ENCODE measurements at regions of chr5 and their contacts with region 1.

Region 1: GRCh38 chr5:68170826-68171558 is 44.6 kb upstream of the PIK3R1 start:
- DNase-seq: no peak
- ATAC-seq: no peak
- H3K4me3 ChIP-seq: no peak overlapping the region
- H3K4me3 Mint-ChIP-seq: no peak overlapping the region
- H3K27ac ChIP-seq: no peak overlapping the region
- H3K27ac Mint-ChIP-seq: no peak overlapping the region
- H3K4me1 ChIP-seq: no peaks in the 10 kb centered on the region
- H3K4me1 Mint-ChIP-seq: no peaks in the 10 kb centered on the region
- H3K27me3 ChIP-seq: peaks cover 0 to 4% of the 10 kb centered on the region in 2 experiments
- H3K27me3 Mint-ChIP-seq: peaks cover 0 to 3% of the 10 kb centered on the region in 2 donors

Region 2: DNA sequence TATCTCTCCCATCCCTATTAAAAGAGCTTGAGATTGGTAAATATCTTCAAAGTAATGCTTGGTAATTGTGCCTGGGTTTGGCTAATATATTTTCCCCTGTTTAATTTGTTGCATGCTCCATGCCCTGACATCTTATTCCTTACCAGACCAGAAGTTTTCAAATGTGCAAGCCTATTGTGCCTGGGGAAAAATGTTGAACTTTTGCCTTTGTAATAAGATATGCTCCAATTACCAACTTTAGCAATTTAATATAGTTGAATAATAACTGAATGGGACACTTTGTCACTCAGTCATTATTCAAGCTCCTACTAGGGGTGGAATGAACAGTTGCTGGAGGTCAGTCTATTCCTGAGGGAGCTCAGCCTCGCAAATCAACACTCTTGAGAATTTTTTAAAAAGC is 276.1 kb after region 1 on chr5:
- CTCF ChIA-PET with region 1: interaction called in 1 of 2 experiments, 10 read pairs
- POLR2A ChIA-PET with region 1: no interaction called
- DNase-seq: no peak
- ATAC-seq: no peak
- H3K4me3 ChIP-seq: no peak overlapping the region
- H3K4me3 Mint-ChIP-seq: no peak overlapping the region
- H3K27ac ChIP-seq: no peak overlapping the region
- H3K27ac Mint-ChIP-seq: no peak overlapping the region
- H3K4me1 ChIP-seq: no peaks in the 10 kb centered on the region
- H3K4me1 Mint-ChIP-seq: peaks cover 0 to 7% (median 3%) of the 10 kb centered on the region in 3 donors
- H3K27me3 ChIP-seq: no peaks in the 10 kb centered on the region
- H3K27me3 Mint-ChIP-seq: no peaks in the 10 kb centered on the region

Region 3: DNA sequence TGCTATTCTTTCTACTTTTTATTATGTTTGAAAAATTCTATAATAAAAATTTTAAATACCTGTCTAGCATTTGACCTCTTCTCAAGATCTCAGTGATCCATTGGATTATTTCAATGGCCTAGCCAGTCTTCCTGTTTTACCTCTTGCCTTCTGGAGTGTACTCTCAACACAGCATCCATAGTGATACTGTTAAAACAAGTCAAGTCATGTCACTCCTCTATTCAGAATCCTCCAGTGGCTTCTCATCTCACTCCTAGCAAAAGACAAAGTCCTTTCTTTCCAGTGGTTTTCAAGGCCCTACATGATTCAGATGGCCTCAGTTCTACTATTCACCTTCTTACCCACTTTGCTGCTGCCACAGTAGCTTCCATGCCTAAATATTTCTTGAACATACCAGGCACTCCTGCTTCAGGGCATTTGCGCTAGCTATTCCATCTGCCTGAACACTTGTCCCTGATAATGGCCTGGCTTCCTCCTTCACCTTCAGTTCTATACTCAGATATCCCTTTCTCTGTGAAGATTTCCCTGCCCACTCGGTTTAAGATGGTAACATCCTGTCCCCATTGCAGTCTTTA is 1245.8 kb after region 1 on chr5:
- CTCF ChIA-PET with region 1: no interaction called
- POLR2A ChIA-PET with region 1: interaction called in 1 of 2 experiments, 22 read pairs
- DNase-seq: no peak
- ATAC-seq: no peak
- H3K4me3 ChIP-seq: no peak overlapping the region
- H3K4me3 Mint-ChIP-seq: peak overlapping the region in 1 of 3 donors; percentile 72
- H3K27ac ChIP-seq: no peak overlapping the region
- H3K27ac Mint-ChIP-seq: no peak overlapping the region
- H3K4me1 ChIP-seq: peaks cover 0 to 8% of the 10 kb centered on the region in 2 experiments
- H3K4me1 Mint-ChIP-seq: peaks cover 10 to 11% (median 11%) of the 10 kb centered on the region in 3 donors
- H3K27me3 ChIP-seq: peaks cover 0 to 2% of the 10 kb centered on the region in 2 experiments
- H3K27me3 Mint-ChIP-seq: no peaks in the 10 kb centered on the region

Measured in T-cell (primary cell).